ENCODE measurements at regions of chr10 and their contacts with region 1.

Region 1: GRCh38 chr10:69612760-69613159 is 17.3 kb upstream of the FAM241B start:
- DNase-seq: no peak
- H3K4me3 ChIP-seq: no peak overlapping the region
- H3K27ac ChIP-seq: no peak overlapping the region
- H3K4me1 ChIP-seq: no peaks in the 10 kb centered on the region
- H3K27me3 ChIP-seq: peaks cover 8% of the 10 kb centered on the region
- CTCF ChIP-seq: no peak
- EP300 ChIP-seq: no peak
- POLR2A ChIP-seq: no peak

Region 2: GRCh38 chr10:69217119-69217754 is 395.5 kb before region 1 on chr10:
- in situ Hi-C with region 1: no loop called
- intact Hi-C with region 1: no loop called
- DNase-seq: no peak
- H3K4me3 ChIP-seq: no peak overlapping the region
- H3K27ac ChIP-seq: peak overlapping the region in 3 of 4 donors; percentile 13 to 65 (median 32)
- H3K4me1 ChIP-seq: peaks cover 5 to 10% (median 6%) of the 10 kb centered on the region in 4 donors
- H3K27me3 ChIP-seq: no peaks in the 10 kb centered on the region
- CTCF ChIP-seq: no peak
- EP300 ChIP-seq: no peak
- POLR2A ChIP-seq: no peak

Region 3: GRCh38 chr10:69425511-69426298 is 187.1 kb before region 1 on chr10:
- in situ Hi-C with region 1: no loop called
- intact Hi-C with region 1: no loop called
- DNase-seq: peak; percentile 73
- H3K4me3 ChIP-seq: no peak overlapping the region
- H3K27ac ChIP-seq: peak overlapping the region; percentile 77 to 82 (median 79)
- H3K4me1 ChIP-seq: peaks cover 14 to 48% (median 30%) of the 10 kb centered on the region in 4 donors
- H3K27me3 ChIP-seq: no peaks in the 10 kb centered on the region
- CTCF ChIP-seq: no peak
- EP300 ChIP-seq: no peak
- POLR2A ChIP-seq: no peak

Region 4: DNA sequence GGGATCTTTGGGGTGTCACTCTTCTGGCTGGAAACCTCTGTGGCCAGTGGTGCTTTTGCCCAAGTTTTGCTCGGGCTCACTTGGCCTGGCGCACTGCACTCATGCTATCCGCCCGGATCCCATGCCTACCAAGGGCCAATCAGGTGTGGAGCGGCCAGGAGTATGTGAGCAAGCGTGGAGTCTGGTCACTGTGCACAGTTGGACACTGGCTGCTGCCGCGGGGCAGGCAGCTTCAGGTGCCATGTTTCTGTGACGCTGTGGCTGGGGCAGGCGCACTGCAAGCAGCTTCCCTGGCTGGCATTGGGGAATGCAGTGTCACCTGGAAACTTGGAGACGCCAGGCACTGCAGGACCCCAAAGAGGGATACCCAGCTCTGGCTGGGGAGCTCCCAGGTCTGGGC is 84.8 kb before region 1 on chr10:
- in situ Hi-C with region 1: no loop called
- intact Hi-C with region 1: loop called (anchors 5 kb)
- DNase-seq: no peak
- H3K4me3 ChIP-seq: no peak overlapping the region
- H3K27ac ChIP-seq: no peak overlapping the region
- H3K4me1 ChIP-seq: no peaks in the 10 kb centered on the region
- H3K27me3 ChIP-seq: no peaks in the 10 kb centered on the region
- CTCF ChIP-seq: no peak
- EP300 ChIP-seq: no peak
- POLR2A ChIP-seq: no peak

Region 5: DNA sequence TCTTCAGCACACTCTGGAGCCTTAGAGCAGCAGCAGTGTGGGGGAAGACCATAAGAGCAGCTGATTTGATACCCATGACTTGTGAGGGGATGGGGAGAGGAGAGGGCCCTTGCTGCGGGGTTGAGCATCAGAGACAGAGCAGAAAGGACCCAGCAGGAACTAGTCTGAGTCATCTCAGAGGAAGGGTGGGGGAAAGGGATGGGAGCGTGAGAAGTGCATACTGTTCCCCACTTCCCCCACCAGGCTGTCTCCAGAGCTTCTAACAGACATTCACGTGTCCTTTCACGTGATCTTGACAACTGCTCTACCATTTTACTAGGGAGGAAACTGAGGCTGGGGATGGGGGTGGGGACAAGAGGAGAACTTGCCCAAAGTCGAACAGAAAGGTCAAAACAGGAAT is 56.0 kb after region 1 on chr10:
- in situ Hi-C with region 1: no loop called
- intact Hi-C with region 1: no loop called
- DNase-seq: no peak
- H3K4me3 ChIP-seq: no peak overlapping the region
- H3K27ac ChIP-seq: no peak overlapping the region
- H3K4me1 ChIP-seq: no peaks in the 10 kb centered on the region
- H3K27me3 ChIP-seq: no peaks in the 10 kb centered on the region
- CTCF ChIP-seq: no peak
- EP300 ChIP-seq: no peak
- POLR2A ChIP-seq: no peak

Region 6: GRCh38 chr10:69703766-69704638 is 91.2 kb after region 1 on chr10:
- in situ Hi-C with region 1: no loop called
- intact Hi-C with region 1: no loop called
- DNase-seq: no peak
- H3K4me3 ChIP-seq: no peak overlapping the region
- H3K27ac ChIP-seq: no peak overlapping the region
- H3K4me1 ChIP-seq: no peaks in the 10 kb centered on the region
- H3K27me3 ChIP-seq: peaks cover 9% of the 10 kb centered on the region
- CTCF ChIP-seq: no peak
- EP300 ChIP-seq: no peak
- POLR2A ChIP-seq: no peak